Testis (tissue), 5 donors: ENCODE measurements at regions of chr14 and their contacts with region 1.

Region 1: DNA sequence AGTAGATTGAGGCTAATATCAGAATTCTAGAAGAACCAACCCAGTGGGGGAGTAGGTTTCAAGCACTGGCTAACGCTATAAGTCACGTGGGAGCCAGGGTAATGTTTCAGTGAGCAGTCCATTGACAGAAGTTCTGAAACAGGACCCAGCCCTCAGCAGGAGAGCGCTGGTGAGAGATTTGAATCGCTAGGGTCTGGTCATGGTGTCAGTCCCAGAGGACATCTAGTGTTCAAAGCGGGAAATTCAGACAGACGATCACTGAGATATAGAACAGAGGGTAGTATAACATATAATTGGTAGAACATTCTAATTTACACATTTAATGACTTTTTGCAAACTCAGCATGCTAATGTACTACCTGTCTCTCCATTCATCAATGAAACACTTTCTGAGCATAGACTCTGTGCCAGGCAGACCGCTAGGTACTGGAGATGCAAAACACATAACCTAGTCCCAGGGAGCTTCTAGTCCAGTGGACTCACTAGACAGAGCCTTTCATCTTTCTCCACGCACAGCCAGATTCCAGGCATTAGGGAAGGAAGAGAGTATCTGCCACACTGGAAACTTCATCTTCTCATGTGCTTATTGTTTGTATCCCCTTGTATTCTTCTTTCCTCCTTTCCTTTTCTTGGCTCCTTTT is 35.4 kb upstream of the RNASE3 start:
- DNase-seq: peak; percentile 82
- H3K4me3 ChIP-seq: no peak overlapping the region
- H3K27ac ChIP-seq: no peak overlapping the region
- H3K4me1 ChIP-seq: no peaks in the 10 kb centered on the region
- H3K27me3 ChIP-seq: no peaks in the 10 kb centered on the region
- CTCF ChIP-seq: peak; percentile 64 to 80 (median 79)
- POLR2A ChIP-seq: no peak

Region 2: DNA sequence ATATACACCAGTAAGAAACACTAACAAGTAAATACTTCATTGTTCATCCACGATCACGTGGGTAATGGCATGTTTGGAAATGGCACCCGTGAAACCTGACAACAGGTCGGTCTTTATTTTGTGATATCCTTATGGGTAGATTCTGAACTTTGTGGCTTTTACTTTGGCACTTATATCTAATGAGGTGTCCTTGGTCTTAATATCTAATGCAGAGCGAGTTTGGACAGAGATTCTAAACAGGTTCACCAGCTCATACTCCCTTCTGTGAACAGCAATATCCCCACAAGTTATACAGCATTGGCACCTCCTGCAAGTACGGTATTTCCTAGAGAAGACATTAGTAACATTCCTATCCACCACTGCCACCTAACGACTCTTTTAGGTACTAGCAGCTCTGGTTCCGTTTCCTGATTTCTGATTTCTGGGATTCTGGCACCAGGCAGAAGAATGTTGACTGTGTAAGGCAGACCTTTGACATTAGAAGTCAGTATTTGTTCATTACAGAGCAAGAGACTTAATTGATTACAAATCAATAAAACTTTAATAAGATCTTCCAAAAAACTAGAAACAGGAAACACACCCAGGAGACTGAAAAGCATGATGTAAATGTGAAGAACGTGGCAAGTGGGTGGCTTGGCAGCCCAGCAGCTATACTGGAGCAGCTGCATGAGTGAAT is 164.8 kb before region 1 on chr14:
- intact Hi-C with region 1: loop called (anchors 10 kb)
- DNase-seq: peak; percentile 70
- H3K4me3 ChIP-seq: no peak overlapping the region
- H3K27ac ChIP-seq: no peak overlapping the region
- H3K4me1 ChIP-seq: peaks cover 3% of the 10 kb centered on the region
- H3K27me3 ChIP-seq: no peaks in the 10 kb centered on the region
- CTCF ChIP-seq: peak; percentile 71 to 85 (median 81)
- POLR2A ChIP-seq: no peak